Activated T-helper 2 cell treated with anti-CD3 and anti-CD28 coated beads, Interferon-gamma antibody, Interleukin-2, Interleukin-4, amounts not matched to agents 10 μg/mL and 5 μg/mL and 100 μg/mL, durations not matched to agents 14 hours and 24 hours and 36 hours (primary cell): ENCODE measurements at regions of chr6 and their contacts with region 1.

Region 1: GRCh38 chr6:135535989-135536414 is 38.5 kb upstream of the AHI1 start:
- DNase-seq: peak; percentile 20
- H3K4me3 Mint-ChIP-seq: peak overlapping the region; percentile 28
- H3K27ac Mint-ChIP-seq: peak overlapping the region; percentile 78
- H3K4me1 Mint-ChIP-seq: peaks cover 56% of the 10 kb centered on the region
- H3K27me3 Mint-ChIP-seq: no peaks in the 10 kb centered on the region

Region 2: DNA sequence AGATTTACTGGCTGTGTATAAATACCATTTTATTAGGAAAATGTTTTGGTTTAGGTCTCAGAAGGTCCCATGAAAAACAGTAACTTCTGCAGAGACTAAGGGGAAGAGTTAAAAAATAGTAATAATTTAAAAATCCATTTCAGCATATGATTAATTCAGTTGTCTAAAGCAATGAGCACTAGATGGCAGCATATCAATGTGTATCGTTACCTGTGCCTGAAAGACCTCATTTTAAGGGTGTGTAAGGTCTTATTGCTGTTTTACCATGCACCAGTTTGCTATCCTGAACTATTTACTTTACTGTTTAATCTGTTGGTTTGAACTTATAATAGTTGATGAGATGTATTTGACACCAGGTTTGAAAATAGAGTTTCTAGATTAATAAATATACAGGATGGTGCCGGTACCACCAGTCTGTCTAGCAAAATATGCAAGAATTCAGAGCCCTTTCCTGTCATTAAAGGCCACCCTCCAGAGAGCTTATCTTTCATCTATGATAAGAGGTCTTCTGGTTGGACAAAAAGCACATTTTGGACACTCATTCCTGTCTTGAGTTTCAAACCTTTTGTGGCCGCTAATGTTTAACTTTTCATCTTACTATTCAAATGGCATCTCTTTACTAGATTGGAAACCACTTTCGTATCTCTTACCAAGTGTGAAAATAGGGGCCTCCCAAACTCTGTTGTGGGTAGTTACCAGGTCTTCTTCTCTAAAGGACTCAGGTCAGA is 29.6 kb before region 1 on chr6:
- intact Hi-C with region 1: loop called (anchors 1 kb)
- DNase-seq: no peak
- H3K4me3 Mint-ChIP-seq: no peak overlapping the region
- H3K27ac Mint-ChIP-seq: peak overlapping the region; percentile 89
- H3K4me1 Mint-ChIP-seq: peaks cover 34% of the 10 kb centered on the region
- H3K27me3 Mint-ChIP-seq: no peaks in the 10 kb centered on the region

Region 3: DNA sequence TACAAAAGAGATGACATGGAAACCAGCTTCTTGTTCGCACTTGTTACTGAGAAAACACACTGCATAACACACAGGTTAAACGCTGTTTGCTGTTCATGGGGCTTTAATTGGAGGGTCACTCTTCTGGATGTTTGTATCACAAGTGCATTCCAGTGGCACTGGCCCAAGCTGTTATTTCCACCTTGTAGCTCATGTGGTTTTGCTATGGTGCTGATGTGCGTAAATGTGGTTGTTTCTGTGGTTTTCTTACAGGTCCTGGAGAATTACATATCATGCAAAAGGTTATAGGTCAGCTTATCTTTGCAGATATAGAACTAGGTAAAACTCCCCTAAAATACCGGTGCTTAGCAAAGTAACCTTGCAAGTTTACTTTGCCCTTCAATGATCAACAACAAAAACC is 50.8 kb after region 1 on chr6:
- intact Hi-C with region 1: loop called (anchors 1 kb)
- DNase-seq: peak; percentile 55
- H3K4me3 Mint-ChIP-seq: no peak overlapping the region
- H3K27ac Mint-ChIP-seq: peak overlapping the region; percentile 95
- H3K4me1 Mint-ChIP-seq: peaks cover 75% of the 10 kb centered on the region
- H3K27me3 Mint-ChIP-seq: no peaks in the 10 kb centered on the region

Region 4: DNA sequence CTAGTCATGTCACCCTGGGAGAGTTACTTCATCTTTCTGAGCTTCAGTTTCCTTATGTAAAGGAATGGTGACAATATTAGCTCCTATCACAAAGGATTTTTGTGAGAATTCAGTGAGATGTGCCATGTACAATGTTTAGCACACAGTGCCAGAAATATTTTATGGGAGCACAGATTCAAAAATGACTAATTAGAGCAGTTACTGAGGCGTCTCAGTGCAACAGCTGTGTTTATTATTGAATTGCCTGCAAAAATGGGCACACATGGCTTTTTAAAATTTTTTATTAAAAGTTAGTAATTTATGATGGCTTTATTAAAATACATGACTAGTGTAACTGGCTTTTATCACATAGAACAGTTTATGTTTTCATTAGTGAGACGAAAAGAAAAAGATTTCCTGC is 95.8 kb after region 1 on chr6:
- intact Hi-C with region 1: no loop called
- DNase-seq: no peak
- H3K4me3 Mint-ChIP-seq: no peak overlapping the region
- H3K27ac Mint-ChIP-seq: peak overlapping the region; percentile 56
- H3K4me1 Mint-ChIP-seq: peaks cover 60% of the 10 kb centered on the region
- H3K27me3 Mint-ChIP-seq: no peaks in the 10 kb centered on the region

Region 5: GRCh38 chr6:135647521-135647920 is 111.5 kb after region 1 on chr6:
- intact Hi-C with region 1: loop called (anchors 1 kb)
- DNase-seq: no peak
- H3K4me3 Mint-ChIP-seq: peak overlapping the region; percentile 92
- H3K27ac Mint-ChIP-seq: peak overlapping the region; percentile 97
- H3K4me1 Mint-ChIP-seq: peaks cover 58% of the 10 kb centered on the region
- H3K27me3 Mint-ChIP-seq: no peaks in the 10 kb centered on the region

Region 6: DNA sequence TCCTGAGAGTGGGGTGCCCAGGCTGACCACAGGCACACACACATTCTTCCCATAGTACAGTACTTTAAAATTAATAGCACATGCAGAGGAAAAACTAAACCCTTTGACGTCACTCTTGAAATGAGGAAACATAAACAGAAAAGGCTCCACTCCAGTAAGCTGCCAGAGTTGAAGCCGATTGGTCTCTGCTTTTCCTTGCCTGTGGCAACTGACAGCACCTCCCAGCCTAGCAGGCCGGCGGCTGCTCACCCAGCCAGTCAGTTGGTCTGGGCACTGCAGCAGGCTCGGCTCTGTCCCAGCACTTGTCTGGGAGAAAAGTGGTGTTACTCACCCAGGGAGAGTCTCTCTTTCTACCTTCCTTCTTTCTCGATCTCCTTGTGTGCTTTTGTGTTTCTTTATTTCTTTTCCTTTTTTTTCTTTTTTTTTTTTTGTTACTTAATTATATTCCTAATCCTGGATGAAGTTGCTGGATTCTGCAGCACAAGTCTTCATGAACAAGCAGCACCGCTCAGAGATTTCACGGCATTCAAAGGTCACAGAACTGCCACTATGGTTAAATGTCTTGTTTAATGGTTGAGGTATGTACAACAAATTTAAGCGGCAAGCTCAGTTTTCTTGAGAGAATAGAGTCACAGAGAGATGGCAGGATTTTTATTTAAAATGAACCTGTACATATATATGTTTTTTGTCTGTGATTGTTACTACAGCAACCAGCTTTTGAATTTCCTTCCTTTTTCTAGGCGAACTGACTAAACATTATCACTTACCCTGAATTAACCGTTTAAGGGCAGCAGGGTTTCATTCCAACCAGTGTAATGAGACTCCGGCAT is 315.7 kb after region 1 on chr6 and contains the start of gene PDE7B:
- intact Hi-C with region 1: loop called (anchors 2 kb)
- DNase-seq: peak; percentile 68
- H3K4me3 Mint-ChIP-seq: peak within 1 kb of the TSS; percentile 94
- H3K27ac Mint-ChIP-seq: peak within 1 kb of the TSS; percentile 89
- H3K4me1 Mint-ChIP-seq: peaks cover 39% of the 10 kb centered on the region
- H3K27me3 Mint-ChIP-seq: no peaks in the 10 kb centered on the region
- total RNA-seq, gene PDE7B: 27.6 and 28.8 TPM in 2 replicates

Region 7: GRCh38 chr6:136226027-136226673 is 690.1 kb after region 1 on chr6:
- intact Hi-C with region 1: loop called (anchors 1 kb)
- DNase-seq: peak; percentile 38
- H3K4me3 Mint-ChIP-seq: no peak overlapping the region
- H3K27ac Mint-ChIP-seq: no peak overlapping the region
- H3K4me1 Mint-ChIP-seq: peaks cover 30% of the 10 kb centered on the region
- H3K27me3 Mint-ChIP-seq: no peaks in the 10 kb centered on the region